Activated CD4-positive, alpha-beta memory T cell treated with anti-CD3 and anti-CD28 coated beads for 36 hours (primary cell): ENCODE measurements at regions of chr11 and their contacts with region 1.

Region 1: DNA sequence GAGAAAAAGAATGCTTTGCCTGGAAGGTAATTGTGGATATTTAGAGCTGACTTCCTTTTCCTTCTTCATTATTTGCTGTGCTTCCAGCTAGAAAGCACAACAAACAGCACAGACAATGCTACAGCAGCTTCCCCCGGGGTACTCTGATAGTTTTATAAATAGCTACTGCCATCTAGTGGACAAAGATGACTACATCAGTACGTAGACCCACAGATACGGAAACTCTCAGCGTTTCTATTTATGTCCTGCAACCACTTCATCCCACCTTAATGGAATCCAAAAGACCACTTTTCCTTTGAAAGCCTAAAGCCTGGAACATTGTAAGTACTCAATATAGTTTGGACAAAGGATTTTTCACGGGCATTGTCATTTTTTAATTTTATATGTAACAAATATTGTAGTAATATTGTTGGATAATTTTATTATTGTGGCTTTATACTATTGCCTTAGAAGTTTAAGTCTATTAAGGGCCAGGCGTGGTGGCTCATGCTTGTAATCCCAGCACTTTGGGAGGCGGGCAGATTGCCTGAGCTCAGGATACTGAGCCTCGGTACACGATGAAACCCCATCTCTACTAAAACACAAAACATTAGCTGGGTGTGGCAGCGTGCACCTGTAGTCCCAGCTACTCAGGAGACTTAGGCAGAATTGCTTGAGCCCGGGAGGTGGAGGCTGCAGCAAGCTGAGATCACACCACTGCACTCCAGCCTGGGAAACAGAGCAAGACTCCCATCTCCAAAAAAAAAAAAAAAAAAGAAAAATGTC is 7.5 kb downstream of the HSPA8 start:
- DNase-seq: no peak
- H3K4me3 Mint-ChIP-seq: no peak overlapping the region
- H3K27ac Mint-ChIP-seq: peak overlapping the region; percentile 100
- H3K4me1 Mint-ChIP-seq: peaks cover 47% of the 10 kb centered on the region
- H3K27me3 Mint-ChIP-seq: no peaks in the 10 kb centered on the region

Region 2: DNA sequence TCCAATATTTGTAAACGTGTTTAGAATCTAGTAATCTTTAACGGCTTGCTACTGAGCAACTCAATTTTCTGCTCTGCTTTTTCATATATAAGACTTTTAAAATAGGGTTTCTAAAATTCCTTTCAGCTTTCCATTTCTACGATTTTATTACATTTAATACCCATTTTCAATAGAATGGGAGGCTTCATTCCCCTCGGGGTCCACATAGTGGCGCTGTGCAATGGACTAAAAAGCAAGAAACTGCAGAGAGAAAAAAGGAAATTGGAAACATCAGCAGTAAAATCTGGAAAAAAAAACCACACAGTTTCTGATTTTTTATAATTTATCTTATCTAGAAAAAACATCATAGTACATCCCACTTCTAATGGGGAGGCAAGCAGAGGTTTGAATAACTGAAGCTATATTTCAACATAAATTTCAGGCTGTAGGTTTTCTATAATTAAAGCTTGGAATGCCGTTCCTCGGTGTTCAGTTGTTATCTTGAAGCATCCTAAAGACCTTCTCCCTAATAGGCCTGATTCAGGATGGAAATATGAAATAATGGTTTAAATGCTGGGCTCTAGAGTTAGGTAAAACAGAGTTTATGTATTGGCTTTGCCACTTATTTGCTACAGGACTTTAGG is 190.7 kb before region 1 on chr11:
- CTCF ChIA-PET with region 1: interaction called, 25 read pairs
- POLR2A ChIA-PET with region 1: no interaction called
- intact Hi-C with region 1: no loop called
- DNase-seq: peak; percentile 63
- H3K4me3 Mint-ChIP-seq: no peak overlapping the region
- H3K27ac Mint-ChIP-seq: no peak overlapping the region
- H3K4me1 Mint-ChIP-seq: no peaks in the 10 kb centered on the region
- H3K27me3 Mint-ChIP-seq: peaks cover 27% of the 10 kb centered on the region

Region 3: GRCh38 chr11:122981388-122982264 is 72.9 kb before region 1 on chr11 and contains the start of gene BSX:
- CTCF ChIA-PET with region 1: no interaction called
- POLR2A ChIA-PET with region 1: no interaction called
- intact Hi-C with region 1: loop called (anchors 2 kb)
- DNase-seq: peak; percentile 70
- H3K4me3 Mint-ChIP-seq: no peak within 1 kb of the TSS
- H3K27ac Mint-ChIP-seq: no peak within 1 kb of the TSS
- H3K4me1 Mint-ChIP-seq: peaks cover 36% of the 10 kb centered on the region
- H3K27me3 Mint-ChIP-seq: peaks cover 84% of the 10 kb centered on the region
- total RNA-seq, gene BSX: not detected

Region 4: DNA sequence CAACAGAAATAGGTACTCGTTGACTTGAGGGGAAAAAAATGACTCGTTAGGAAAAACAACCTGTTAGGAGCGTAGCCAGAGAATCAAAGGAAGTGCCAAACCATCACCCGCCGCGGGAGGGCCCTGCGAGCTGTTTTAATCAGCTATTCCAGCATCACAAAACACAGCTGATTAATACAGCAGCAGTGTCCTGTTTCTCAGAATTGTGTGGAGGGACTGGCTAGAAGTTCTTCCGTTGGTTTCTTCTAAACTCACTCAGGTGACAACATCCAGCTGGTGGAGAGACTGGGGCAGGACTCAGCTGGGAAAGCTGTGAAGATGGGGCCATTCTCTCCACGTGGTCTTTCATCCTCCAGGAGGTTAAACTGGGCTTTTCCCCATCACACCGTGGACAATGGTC is 20.6 kb before region 1 on chr11:
- CTCF ChIA-PET with region 1: interaction called, 11 read pairs
- POLR2A ChIA-PET with region 1: interaction called, 5 read pairs
- intact Hi-C with region 1: no loop called
- DNase-seq: peak; percentile 43
- H3K4me3 Mint-ChIP-seq: no peak overlapping the region
- H3K27ac Mint-ChIP-seq: no peak overlapping the region
- H3K4me1 Mint-ChIP-seq: no peaks in the 10 kb centered on the region
- H3K27me3 Mint-ChIP-seq: no peaks in the 10 kb centered on the region

Region 5: DNA sequence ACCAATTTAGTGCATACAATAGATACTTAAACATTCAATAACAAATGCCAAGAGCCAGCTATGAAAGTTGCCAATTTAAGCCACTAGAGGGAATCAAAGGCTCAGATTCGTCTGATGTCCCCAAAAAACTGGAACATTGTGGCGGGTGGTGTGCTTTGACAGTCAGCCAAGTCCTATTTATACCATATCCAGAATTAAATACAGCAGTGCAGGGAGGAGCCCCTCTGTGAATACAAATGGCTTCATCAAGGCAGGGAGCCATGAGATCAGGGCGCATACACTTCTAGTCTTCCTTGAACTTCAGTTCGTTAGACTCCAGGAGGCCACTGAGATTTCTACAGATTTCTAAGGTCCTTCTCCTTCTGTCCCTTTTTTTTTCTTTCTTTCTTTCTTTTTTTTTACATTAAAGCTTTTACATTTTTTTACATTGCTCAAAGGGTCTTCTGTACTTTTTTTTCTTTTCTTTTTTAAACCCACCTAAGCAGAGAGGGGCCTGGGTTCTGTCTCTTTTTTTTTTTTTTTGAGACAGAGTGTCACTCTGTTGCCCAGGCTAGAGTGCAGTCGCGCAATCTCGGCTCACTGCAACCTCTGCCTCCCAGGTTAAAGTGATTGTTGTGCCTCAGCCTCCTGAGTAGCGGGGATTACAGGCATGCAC is 49.0 kb after region 1 on chr11:
- CTCF ChIA-PET with region 1: interaction called, 13 read pairs
- POLR2A ChIA-PET with region 1: no interaction called
- intact Hi-C with region 1: no loop called
- DNase-seq: peak; percentile 42
- H3K4me3 Mint-ChIP-seq: no peak overlapping the region
- H3K27ac Mint-ChIP-seq: no peak overlapping the region
- H3K4me1 Mint-ChIP-seq: peaks cover 16% of the 10 kb centered on the region
- H3K27me3 Mint-ChIP-seq: no peaks in the 10 kb centered on the region

Region 6: DNA sequence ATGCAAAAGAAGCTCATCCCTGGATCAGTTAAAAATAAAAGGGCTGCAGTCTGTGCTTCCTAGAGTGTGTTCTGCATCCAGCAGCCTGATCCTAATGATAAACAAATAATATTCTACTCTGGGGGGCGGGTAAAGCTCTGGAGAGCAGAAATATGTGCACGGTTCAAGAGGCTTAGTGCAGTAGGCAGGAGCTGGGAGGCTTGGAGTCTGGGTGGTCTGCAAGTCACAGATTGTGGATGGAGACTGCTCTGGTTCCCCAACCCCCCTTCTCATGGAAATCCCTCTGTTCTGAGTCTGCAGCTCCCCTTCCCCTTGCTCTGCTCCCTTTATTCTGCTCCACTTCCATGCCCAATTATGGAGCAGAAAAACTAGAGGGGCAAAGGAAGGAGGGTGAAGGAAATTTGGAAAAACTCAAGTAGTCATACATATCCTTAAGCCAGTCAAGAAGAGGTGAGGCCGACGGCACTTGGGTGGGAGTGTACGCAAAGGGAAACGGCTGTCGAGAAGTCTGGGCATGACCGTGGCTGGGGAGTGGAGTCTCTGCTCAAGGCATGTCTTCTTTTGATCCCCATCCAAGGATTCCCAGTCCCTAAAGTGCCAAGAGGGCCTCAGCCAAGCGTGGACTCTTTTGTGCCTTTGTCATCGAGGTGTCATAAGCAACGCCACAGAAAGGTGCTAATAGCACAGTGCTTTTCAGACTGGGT is 156.8 kb after region 1 on chr11:
- CTCF ChIA-PET with region 1: no interaction called
- POLR2A ChIA-PET with region 1: no interaction called
- intact Hi-C with region 1: no loop called
- DNase-seq: no peak
- H3K4me3 Mint-ChIP-seq: no peak overlapping the region
- H3K27ac Mint-ChIP-seq: no peak overlapping the region
- H3K4me1 Mint-ChIP-seq: no peaks in the 10 kb centered on the region
- H3K27me3 Mint-ChIP-seq: peaks cover 30% of the 10 kb centered on the region